HepG2 (cell line): ENCODE measurements at regions of chr11 and their contacts with region 1.

Region 1: GRCh38 chr11:34585735-34586487 is 35.0 kb upstream of the EHF start:
- DNase-seq: peak; percentile 70
- ATAC-seq: peak; percentile 81
- H3K4me3 ChIP-seq: peak overlapping the region; percentile 10 to 56 (median 48); a peak in 4 of 6 replicates
- H3K27ac ChIP-seq: peak overlapping the region; percentile 51
- H3K4me1 ChIP-seq: peaks cover 40% of the 10 kb centered on the region
- H3K27me3 ChIP-seq: no peaks in the 10 kb centered on the region
- CTCF ChIP-seq: peak; percentile 77
- EP300 ChIP-seq: peak in 1 of 2 experiments; percentile 86; a peak in 1 of 4 replicates
- POLR2A ChIP-seq: no peak
- RAD21 ChIP-seq: peak; percentile 90

Region 2: DNA sequence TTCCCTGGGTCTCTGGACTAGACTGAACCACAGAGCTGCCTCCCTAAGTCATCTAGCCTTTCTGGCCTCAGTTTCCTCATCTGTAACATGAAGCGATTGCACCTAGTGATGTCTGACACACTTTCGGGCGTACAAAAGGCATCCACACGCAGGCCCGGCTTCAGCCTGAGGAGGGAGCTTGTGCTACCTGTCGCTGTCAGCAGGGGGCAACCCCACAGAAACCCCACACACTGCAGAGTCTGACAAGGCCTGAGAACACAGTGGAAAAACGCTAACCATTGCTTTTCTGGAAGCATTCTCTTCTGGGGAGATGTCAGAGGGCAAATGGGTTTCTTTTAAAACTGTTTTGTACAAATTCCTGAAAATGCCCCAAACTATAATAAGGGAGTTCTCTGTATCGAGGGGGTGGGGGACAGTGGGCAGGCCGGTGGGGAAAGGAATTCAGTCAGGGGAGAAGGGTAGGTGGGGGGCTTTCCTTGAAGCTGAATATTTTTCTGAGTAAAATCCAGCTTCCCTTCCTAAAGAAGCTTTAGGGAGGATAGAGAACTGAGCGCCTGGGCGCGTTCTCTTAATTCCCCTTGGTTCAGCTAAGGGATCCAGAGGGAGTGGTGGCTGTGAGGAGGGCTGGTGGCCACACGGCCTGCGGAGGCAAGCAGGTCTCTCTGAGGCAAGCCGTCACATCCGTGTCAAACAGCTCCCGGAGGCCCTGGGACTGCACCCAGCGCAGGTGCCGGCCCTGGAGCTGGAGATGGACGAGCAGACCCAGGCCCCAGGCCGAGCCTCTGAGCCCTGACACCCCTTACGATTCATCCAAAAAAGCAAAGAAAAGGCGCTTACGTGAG is 72.8 kb before region 1 on chr11:
- CTCF ChIA-PET with region 1: no interaction called
- POLR2A ChIA-PET with region 1: interaction called, 5 read pairs
- in situ Hi-C with region 1: no loop called
- intact Hi-C with region 1: loop called (anchors 1 kb)
- DNase-seq: peak; percentile 69
- ATAC-seq: peak; percentile 96
- H3K4me3 ChIP-seq: peak overlapping the region; percentile 22 to 58 (median 32); a peak in 5 of 6 replicates
- H3K27ac ChIP-seq: no peak overlapping the region
- H3K4me1 ChIP-seq: peaks cover 49% of the 10 kb centered on the region
- H3K27me3 ChIP-seq: no peaks in the 10 kb centered on the region; a peak in 1 of 5 replicates
- CTCF ChIP-seq: peak; percentile 93
- EP300 ChIP-seq: peak in 1 of 2 experiments; percentile 33; a peak in 1 of 4 replicates
- POLR2A ChIP-seq: no peak
- RAD21 ChIP-seq: peak; percentile 74

Region 3: DNA sequence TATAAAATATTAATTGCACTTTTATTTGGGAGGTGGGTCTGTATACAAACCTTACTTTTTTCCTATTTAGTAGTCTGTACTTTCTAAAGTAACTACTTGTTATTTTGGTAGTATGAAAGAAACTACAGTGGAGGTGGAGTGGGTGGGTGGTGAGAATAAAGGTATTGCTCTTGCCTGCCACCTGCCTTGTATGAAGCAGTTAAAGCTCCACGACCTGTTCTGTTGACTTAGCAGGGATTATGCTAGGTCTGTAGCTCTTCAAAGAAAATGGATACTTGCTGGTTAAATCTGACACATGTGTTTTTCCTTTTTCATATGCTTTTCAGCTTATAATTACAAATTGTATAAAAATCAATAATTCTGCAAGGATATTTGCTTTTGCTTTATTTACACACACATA is 146.9 kb after region 1 on chr11:
- CTCF ChIA-PET with region 1: no interaction called
- POLR2A ChIA-PET with region 1: no interaction called
- in situ Hi-C with region 1: no loop called
- intact Hi-C with region 1: loop called (anchors 2 kb)
- DNase-seq: peak; percentile 30
- ATAC-seq: peak; percentile 76
- H3K4me3 ChIP-seq: no peak overlapping the region
- H3K27ac ChIP-seq: no peak overlapping the region
- H3K4me1 ChIP-seq: peaks cover 21% of the 10 kb centered on the region
- H3K27me3 ChIP-seq: no peaks in the 10 kb centered on the region
- CTCF ChIP-seq: peak; percentile 41
- EP300 ChIP-seq: no peak
- POLR2A ChIP-seq: no peak
- RAD21 ChIP-seq: no peak

Region 4: DNA sequence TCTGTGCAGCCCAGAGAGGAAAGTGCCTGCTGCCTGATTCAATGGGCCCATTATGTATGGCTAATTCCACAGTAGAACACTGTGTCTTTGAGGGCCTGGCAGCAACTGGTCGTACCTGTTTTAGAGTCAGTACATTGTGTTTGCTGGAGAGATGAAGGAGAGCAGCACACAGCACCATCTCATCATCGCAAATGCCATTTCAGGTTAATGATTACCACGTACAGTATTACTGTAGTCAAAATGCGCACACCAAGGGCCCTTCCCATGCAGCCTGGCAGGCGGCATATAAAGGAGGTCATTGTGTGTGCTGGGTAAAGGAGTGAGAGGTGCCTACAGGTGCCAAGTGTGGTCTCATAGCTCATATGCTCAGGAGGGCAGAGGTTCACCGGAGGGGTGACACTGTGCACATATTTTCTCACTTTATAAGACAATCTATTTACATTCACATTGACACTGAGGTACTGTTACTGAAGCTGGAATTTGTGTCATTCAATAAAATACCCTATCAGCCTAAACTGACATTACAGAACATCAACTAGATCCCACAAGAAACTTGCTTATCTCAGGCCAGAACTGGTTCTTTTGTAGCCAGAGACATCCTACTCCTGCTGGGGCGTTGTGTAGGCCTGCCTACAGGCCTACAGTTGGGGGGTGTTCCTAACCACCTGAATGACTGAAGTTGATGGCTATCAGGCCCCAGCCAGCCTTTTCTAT is 239.9 kb after region 1 on chr11:
- CTCF ChIA-PET with region 1: no interaction called
- POLR2A ChIA-PET with region 1: no interaction called
- in situ Hi-C with region 1: no loop called
- intact Hi-C with region 1: loop called (anchors 2 kb)
- DNase-seq: peak; percentile 99
- ATAC-seq: peak; percentile 96
- H3K4me3 ChIP-seq: peak overlapping the region in 2 of 3 experiments; percentile 15 to 38; a peak in 2 of 6 replicates
- H3K27ac ChIP-seq: peak overlapping the region; percentile 92
- H3K4me1 ChIP-seq: peaks cover 62% of the 10 kb centered on the region
- H3K27me3 ChIP-seq: no peaks in the 10 kb centered on the region
- CTCF ChIP-seq: no peak
- EP300 ChIP-seq: peak; percentile 36 to 73; a peak in 2 of 4 replicates
- POLR2A ChIP-seq: peak; percentile 33 to 70; a peak in 2 of 4 replicates
- RAD21 ChIP-seq: peak; percentile 8; the same call in 1 of the 2 replicates

Region 5: DNA sequence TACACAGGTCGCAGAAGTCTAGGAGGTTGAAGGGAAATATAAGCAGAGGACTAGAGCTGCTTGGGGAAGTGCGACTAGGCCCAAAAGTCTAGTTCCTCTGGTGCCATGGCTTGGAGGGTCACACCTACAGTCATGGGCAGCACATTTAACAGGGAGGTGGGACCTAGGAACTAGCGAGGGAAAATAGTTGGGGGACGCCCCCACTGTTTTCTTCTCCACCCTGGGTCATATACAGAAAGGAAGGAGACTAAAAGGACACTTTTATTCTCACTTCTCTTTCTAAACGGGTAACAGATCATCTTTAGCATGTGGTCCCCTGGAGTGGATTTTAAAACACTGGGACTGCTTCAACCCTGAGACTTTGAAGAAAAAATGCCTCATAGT is 313.7 kb after region 1 on chr11:
- CTCF ChIA-PET with region 1: interaction called, 16 read pairs
- POLR2A ChIA-PET with region 1: no interaction called
- in situ Hi-C with region 1: loop called (anchors 5 kb)
- intact Hi-C with region 1: no loop called
- DNase-seq: no peak
- ATAC-seq: no peak
- H3K4me3 ChIP-seq: no peak overlapping the region
- H3K27ac ChIP-seq: no peak overlapping the region
- H3K4me1 ChIP-seq: peaks cover 9% of the 10 kb centered on the region
- H3K27me3 ChIP-seq: no peaks in the 10 kb centered on the region
- CTCF ChIP-seq: no peak
- EP300 ChIP-seq: no peak
- POLR2A ChIP-seq: no peak
- RAD21 ChIP-seq: no peak